Activated CD8-positive, alpha-beta memory T cell treated with anti-CD3 and anti-CD28 coated beads, Interleukin-2, amount 10 ng/mL, durations not matched to agents 7 days and 5 days (primary cell): ENCODE measurements at regions of chr10 and their contacts with region 1.

Region 1: GRCh38 chr10:118734475-118734874 is 20.3 kb downstream of the CACUL1 start:
- DNase-seq: no peak
- ATAC-seq: no peak
- H3K4me3 Mint-ChIP-seq: no peak overlapping the region
- H3K27ac Mint-ChIP-seq: no peak overlapping the region
- H3K4me1 Mint-ChIP-seq: peaks cover 41% of the 10 kb centered on the region
- H3K27me3 Mint-ChIP-seq: no peaks in the 10 kb centered on the region

Region 2: GRCh38 chr10:118754720-118755480 is 20.4 kb after region 1 on chr10 and contains the start of gene CACUL1:
- CTCF ChIA-PET with region 1: interaction called, 15 read pairs
- DNase-seq: peak; percentile 100
- ATAC-seq: peak; percentile 99
- H3K4me3 Mint-ChIP-seq: peak within 1 kb of the TSS; percentile 87
- H3K27ac Mint-ChIP-seq: peak within 1 kb of the TSS; percentile 81
- H3K4me1 Mint-ChIP-seq: peaks cover 22% of the 10 kb centered on the region
- H3K27me3 Mint-ChIP-seq: peaks cover 9% of the 10 kb centered on the region
- total RNA-seq, gene CACUL1: 25.6 to 26.4 TPM

Region 3: GRCh38 chr10:118850418-118851061 is 116.1 kb after region 1 on chr10:
- CTCF ChIA-PET with region 1: no interaction called
- DNase-seq: peak; percentile 81
- ATAC-seq: peak; percentile 9
- H3K4me3 Mint-ChIP-seq: no peak overlapping the region
- H3K27ac Mint-ChIP-seq: no peak overlapping the region
- H3K4me1 Mint-ChIP-seq: no peaks in the 10 kb centered on the region
- H3K27me3 Mint-ChIP-seq: peaks cover 16% of the 10 kb centered on the region